ENCODE measurements at regions of chr14 and their contacts with region 1.

Region 1: GRCh38 chr14:102304611-102305509 is at the start of gene MOK:
- DNase-seq: peak; percentile 94 to 99 (median 98)
- ATAC-seq: peak; percentile 92
- H3K4me3 ChIP-seq: peak within 1 kb of the TSS; percentile 83 to 97
- H3K4me3 Mint-ChIP-seq: peak within 1 kb of the TSS; percentile 91
- H3K27ac ChIP-seq: peak within 1 kb of the TSS; percentile 84 to 88
- H3K27ac Mint-ChIP-seq: peak within 1 kb of the TSS; percentile 94
- H3K4me1 ChIP-seq: peaks cover 5% of the 10 kb centered on the region
- H3K4me1 Mint-ChIP-seq: peaks cover 10% of the 10 kb centered on the region
- H3K27me3 ChIP-seq: no peaks in the 10 kb centered on the region
- H3K27me3 Mint-ChIP-seq: peaks cover 2% of the 10 kb centered on the region
- CTCF ChIP-seq: no peak
- total RNA-seq, gene MOK: 2.7 to 3.6 TPM

Region 2: DNA sequence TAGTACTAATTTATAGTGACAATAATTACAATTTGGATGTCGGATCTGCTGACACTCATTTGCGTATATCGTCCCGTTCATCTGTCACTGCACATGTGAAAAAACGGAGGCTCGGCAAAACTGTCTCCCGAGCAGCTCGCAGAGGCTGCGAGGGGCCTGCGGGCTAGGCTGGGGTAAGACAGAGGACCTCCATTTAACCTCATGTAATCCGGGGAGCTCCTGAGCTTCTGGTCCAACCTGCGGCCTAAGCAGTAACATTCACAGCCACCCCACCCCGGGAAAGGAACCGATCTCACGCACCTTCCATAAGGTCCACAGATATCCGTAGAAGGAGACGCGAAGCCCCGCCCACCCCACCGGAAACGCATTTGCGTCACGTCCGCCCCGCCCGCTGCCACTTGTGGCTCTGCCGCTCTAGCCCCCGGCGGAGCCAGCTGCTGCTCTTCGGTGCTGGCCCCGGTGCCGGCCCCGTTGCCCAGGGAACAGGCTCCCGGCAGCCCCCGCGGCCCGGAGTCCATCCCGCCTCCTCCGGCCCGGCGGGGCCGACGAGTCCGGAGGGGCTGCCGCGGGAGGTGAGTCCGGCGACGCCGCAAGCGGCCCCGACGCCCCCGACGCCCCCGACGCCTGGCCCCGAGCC is 57.8 kb after region 1 on chr14 and contains the starts of genes CINP and TECPR2:
- CTCF ChIA-PET with region 1: interaction called, 4 read pairs
- POLR2A ChIA-PET with region 1: interaction called, 3 read pairs
- intact Hi-C with region 1: loop called in 1 of 2 experiments (anchors 1 kb)
- DNase-seq: peak; percentile 93 to 97 (median 96)
- ATAC-seq: peak; percentile 90
- H3K4me3 ChIP-seq: peak within 1 kb of the TSS; percentile 67 to 75
- H3K4me3 Mint-ChIP-seq: peak within 1 kb of the TSS; percentile 95
- H3K27ac ChIP-seq: peak within 1 kb of the TSS; percentile 82 to 86
- H3K27ac Mint-ChIP-seq: peak within 1 kb of the TSS; percentile 96
- H3K4me1 ChIP-seq: peaks cover 15% of the 10 kb centered on the region
- H3K4me1 Mint-ChIP-seq: peaks cover 24% of the 10 kb centered on the region
- H3K27me3 ChIP-seq: no peaks in the 10 kb centered on the region
- H3K27me3 Mint-ChIP-seq: no peaks in the 10 kb centered on the region
- CTCF ChIP-seq: no peak
- total RNA-seq, gene CINP: 15.9 to 19.2 TPM
- total RNA-seq, gene TECPR2: 3.4 to 5.8 TPM